Caco-2 (cell line): ENCODE measurements at regions of chr5 and their contacts with region 1.

Region 1: DNA sequence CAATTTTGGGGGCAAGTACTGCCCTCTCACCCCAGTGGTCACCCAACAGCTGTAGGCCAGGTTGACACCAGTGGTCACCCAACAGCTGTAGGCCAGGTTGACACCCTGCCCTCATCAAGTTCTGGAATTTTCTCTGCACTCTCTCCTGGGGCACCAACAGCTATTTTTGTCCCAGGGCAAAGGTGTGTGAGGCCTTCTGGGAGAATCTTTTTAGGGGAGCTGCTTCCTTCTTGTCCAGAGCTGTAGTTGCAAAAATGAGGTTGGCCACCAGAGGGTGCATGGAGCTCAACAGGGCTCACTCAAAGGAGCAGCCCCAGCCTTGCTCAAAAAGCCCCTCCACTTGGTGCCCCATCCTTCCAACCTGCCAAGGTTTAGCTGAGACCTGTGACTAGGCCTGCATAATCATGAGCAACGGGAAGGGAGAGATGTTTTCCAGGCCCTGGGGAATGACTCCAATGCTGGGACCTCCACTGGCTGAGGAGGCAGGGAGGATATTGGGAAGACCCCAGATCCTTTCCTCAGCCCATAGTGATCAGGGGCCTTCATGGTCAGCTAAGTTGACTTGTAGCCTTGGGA is 10.6 kb upstream of the P4HA2 start:
- DNase-seq: peak; percentile 78 to 83
- H3K4me3 ChIP-seq: no peak overlapping the region
- H3K4me3 Mint-ChIP-seq: no peak overlapping the region
- H3K27ac Mint-ChIP-seq: no peak overlapping the region
- H3K4me1 ChIP-seq: no peaks in the 10 kb centered on the region
- H3K4me1 Mint-ChIP-seq: no peaks in the 10 kb centered on the region
- H3K27me3 ChIP-seq: no peaks in the 10 kb centered on the region
- H3K27me3 Mint-ChIP-seq: no peaks in the 10 kb centered on the region
- CTCF ChIP-seq: peak; percentile 66 to 88

Region 2: GRCh38 chr5:132227485-132228240 is 10.6 kb before region 1 on chr5 and contains the start of gene P4HA2:
- CTCF ChIA-PET with region 1: interaction called, 23 read pairs
- POLR2A ChIA-PET with region 1: no interaction called
- intact Hi-C with region 1: no loop called
- DNase-seq: peak; percentile 89 to 91
- H3K4me3 ChIP-seq: peak within 1 kb of the TSS; percentile 59
- H3K4me3 Mint-ChIP-seq: peak within 1 kb of the TSS; percentile 77
- H3K27ac Mint-ChIP-seq: peak within 1 kb of the TSS; percentile 44
- H3K4me1 ChIP-seq: peaks cover 5% of the 10 kb centered on the region; the same call in 1 of the 2 replicates
- H3K4me1 Mint-ChIP-seq: peaks cover 5% of the 10 kb centered on the region
- H3K27me3 ChIP-seq: no peaks in the 10 kb centered on the region
- H3K27me3 Mint-ChIP-seq: no peaks in the 10 kb centered on the region
- CTCF ChIP-seq: peak in 1 of 2 experiments; percentile 10
- total RNA-seq, gene P4HA2: 41.0 and 42.3 TPM in 2 replicates

Region 3: DNA sequence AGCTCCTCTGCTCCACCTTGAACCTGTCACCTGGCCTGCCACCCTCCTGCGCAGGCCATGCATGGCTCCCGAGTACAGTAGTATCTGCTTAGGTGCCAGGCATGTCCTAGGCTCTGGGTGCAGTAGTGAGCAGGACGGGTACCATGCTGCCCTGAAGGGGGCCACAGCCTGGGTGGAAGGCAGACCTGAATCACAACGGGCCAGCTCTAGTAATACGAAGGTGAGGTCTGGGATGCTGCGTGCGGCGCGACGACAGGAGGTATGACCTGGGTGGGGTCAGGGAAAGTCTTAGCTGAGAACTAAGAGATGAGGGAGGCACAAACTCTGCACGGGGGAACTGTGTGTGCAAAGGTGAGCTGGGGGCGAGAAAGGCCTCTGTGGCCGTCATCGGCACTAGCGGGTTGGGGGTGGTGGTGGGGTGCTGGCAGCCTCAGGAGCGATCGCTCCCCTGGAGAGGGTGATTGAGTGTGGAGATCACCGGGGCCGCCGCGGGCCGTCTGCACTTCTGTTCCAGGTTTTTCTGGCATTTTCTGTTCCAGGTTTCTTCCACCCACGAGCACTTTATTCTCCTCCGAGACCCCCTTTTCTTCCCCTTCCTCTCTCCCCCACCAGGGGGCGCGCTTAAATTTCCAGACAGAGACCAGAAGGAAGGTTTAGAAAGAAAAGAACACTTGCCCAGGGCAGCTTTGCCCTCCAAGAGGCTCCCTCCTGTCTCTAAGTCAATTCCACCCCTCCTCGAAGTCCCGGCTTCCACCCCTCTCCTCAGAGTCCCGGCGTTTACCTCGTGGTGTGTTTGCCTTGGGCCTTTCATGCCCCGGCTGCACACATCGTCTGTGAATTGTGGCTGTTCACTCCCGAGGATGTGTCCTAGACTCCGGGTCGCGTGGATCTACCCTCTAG is 34.3 kb after region 1 on chr5:
- CTCF ChIA-PET with region 1: interaction called, 12 read pairs
- POLR2A ChIA-PET with region 1: no interaction called
- intact Hi-C with region 1: loop called (anchors 5 kb)
- DNase-seq: peak; percentile 81 to 86
- H3K4me3 ChIP-seq: no peak overlapping the region
- H3K4me3 Mint-ChIP-seq: no peak overlapping the region
- H3K27ac Mint-ChIP-seq: no peak overlapping the region
- H3K4me1 ChIP-seq: peaks cover 30% of the 10 kb centered on the region
- H3K4me1 Mint-ChIP-seq: peaks cover 32% of the 10 kb centered on the region
- H3K27me3 ChIP-seq: no peaks in the 10 kb centered on the region
- H3K27me3 Mint-ChIP-seq: no peaks in the 10 kb centered on the region
- CTCF ChIP-seq: peak; percentile 86 to 88

Region 4: DNA sequence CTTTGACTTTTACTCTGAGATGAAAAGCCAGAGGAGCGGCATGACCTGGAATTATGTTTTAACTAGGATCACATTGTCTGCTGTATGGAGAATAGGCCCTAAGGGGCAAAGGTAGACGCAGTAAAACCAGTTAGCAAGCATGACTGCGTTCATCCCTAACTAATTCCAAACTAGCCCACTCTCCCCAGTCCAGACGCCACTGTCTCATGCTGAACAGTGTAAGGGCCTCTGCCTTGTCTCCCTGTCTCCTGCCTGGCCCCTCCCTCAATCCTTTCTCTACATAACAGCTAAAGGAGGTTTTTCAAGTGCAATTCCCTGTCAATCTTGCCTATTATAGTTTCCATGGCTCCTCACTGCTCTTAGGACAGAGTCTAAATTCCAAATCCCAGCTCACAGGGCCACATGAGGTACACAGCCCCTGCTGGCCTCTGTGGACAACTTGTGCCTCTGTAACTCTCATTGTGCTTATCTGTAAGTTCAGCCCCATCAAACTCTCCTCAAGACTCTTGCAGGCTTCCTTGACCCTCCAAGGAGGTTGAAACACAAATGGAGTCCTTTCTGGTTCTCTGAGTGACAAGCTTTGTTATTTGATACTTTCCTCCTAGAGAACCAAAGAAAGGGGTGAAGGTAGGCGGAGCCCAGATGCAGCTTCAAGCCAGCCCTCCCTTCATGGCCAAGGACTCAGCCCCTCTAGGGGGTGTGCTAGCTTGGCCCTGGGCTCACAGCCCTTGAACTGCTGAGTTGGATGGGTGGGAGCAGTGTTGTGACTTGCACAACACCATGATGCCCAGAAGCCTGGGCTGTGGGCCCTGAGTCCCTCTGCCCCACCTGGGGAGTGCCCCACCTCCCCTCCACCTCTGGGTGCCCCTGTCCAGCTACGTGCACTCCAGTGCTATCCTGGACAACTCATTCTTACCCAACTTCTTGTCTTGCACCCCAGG is 40.0 kb after region 1 on chr5:
- CTCF ChIA-PET with region 1: interaction called, 12 read pairs
- POLR2A ChIA-PET with region 1: no interaction called
- intact Hi-C with region 1: loop called (anchors 2 kb)
- DNase-seq: peak; percentile 82 to 91
- H3K4me3 ChIP-seq: no peak overlapping the region
- H3K4me3 Mint-ChIP-seq: peak overlapping the region; percentile 13
- H3K27ac Mint-ChIP-seq: peak overlapping the region; percentile 45
- H3K4me1 ChIP-seq: peaks cover 46% of the 10 kb centered on the region
- H3K4me1 Mint-ChIP-seq: peaks cover 50% of the 10 kb centered on the region
- H3K27me3 ChIP-seq: no peaks in the 10 kb centered on the region
- H3K27me3 Mint-ChIP-seq: no peaks in the 10 kb centered on the region
- CTCF ChIP-seq: peak; percentile 13 to 37

Region 5: DNA sequence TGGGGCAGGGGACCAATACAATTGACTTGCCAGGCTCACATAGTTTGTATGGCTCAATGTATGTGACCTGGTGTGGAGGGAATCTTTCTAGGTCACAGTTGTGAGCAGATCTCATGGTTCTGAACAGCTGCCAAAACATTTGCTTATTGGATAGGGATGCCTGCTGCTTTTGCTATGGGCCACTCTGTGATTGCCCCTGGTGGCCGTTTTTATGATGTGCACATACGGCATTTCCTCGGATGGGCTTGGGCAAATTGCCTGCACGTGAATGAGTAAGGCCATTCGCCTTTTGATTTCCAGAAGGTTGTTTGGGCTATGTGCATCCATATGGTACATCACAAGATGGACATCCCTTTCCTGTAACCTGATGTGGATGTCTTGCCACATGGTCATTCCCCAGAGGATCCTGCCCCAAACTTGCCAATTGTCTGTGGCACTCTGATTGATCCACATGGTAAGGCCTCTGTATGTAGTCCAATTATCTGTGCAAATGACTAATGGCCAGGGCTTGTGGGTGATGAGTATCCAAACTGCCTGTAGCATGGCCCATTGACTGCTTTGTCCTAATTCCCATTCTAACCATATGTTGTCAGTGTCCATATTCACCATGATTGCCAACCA is 45.3 kb after region 1 on chr5:
- CTCF ChIA-PET with region 1: interaction called, 12 read pairs
- POLR2A ChIA-PET with region 1: no interaction called
- intact Hi-C with region 1: loop called (anchors 2 kb)
- DNase-seq: peak in 1 of 2 experiments; percentile 39
- H3K4me3 ChIP-seq: no peak overlapping the region
- H3K4me3 Mint-ChIP-seq: no peak overlapping the region
- H3K27ac Mint-ChIP-seq: no peak overlapping the region
- H3K4me1 ChIP-seq: peaks cover 13% of the 10 kb centered on the region
- H3K4me1 Mint-ChIP-seq: peaks cover 18% of the 10 kb centered on the region
- H3K27me3 ChIP-seq: no peaks in the 10 kb centered on the region
- H3K27me3 Mint-ChIP-seq: no peaks in the 10 kb centered on the region
- CTCF ChIP-seq: peak; percentile 43 to 49

Region 6: GRCh38 chr5:132315529-132316083 is 77.3 kb after region 1 on chr5:
- CTCF ChIA-PET with region 1: interaction called, 7 read pairs
- POLR2A ChIA-PET with region 1: no interaction called
- intact Hi-C with region 1: loop called (anchors 1 kb)
- DNase-seq: no peak
- H3K4me3 ChIP-seq: no peak overlapping the region
- H3K4me3 Mint-ChIP-seq: no peak overlapping the region
- H3K27ac Mint-ChIP-seq: no peak overlapping the region
- H3K4me1 ChIP-seq: no peaks in the 10 kb centered on the region
- H3K4me1 Mint-ChIP-seq: peaks cover 6% of the 10 kb centered on the region
- H3K27me3 ChIP-seq: no peaks in the 10 kb centered on the region
- H3K27me3 Mint-ChIP-seq: no peaks in the 10 kb centered on the region
- CTCF ChIP-seq: peak in 1 of 2 experiments; percentile 42

Region 7: GRCh38 chr5:132410451-132411381 is 172.5 kb after region 1 on chr5:
- CTCF ChIA-PET with region 1: interaction called, 6 read pairs
- POLR2A ChIA-PET with region 1: interaction called, 3 read pairs
- intact Hi-C with region 1: loop called (anchors 2 kb)
- DNase-seq: peak; percentile 87 to 94
- H3K4me3 ChIP-seq: peak overlapping the region; percentile 72
- H3K4me3 Mint-ChIP-seq: peak overlapping the region; percentile 78
- H3K27ac Mint-ChIP-seq: peak overlapping the region; percentile 82
- H3K4me1 ChIP-seq: peaks cover 32% of the 10 kb centered on the region
- H3K4me1 Mint-ChIP-seq: peaks cover 23% of the 10 kb centered on the region
- H3K27me3 ChIP-seq: no peaks in the 10 kb centered on the region
- H3K27me3 Mint-ChIP-seq: no peaks in the 10 kb centered on the region
- CTCF ChIP-seq: peak; percentile 85 to 87